B cell (primary cell): ENCODE measurements at regions of chr1 and their contacts with region 1.

Region 1: GRCh38 chr1:84944767-84945486 is 51.9 kb upstream of the LPAR3 start:
- DNase-seq: peak; percentile 95
- ATAC-seq: peak; percentile 93
- H3K4me3 ChIP-seq: peak overlapping the region; percentile 49 to 76 (median 60)
- H3K4me3 Mint-ChIP-seq: peak overlapping the region; percentile 80
- H3K27ac ChIP-seq: peak overlapping the region; percentile 78 to 83
- H3K27ac Mint-ChIP-seq: peak overlapping the region; percentile 87
- H3K4me1 ChIP-seq: peaks cover 0 to 13% of the 10 kb centered on the region in 2 donors
- H3K4me1 Mint-ChIP-seq: peaks cover 10% of the 10 kb centered on the region
- H3K27me3 ChIP-seq: no peaks in the 10 kb centered on the region
- H3K27me3 Mint-ChIP-seq: no peaks in the 10 kb centered on the region
- CTCF ChIP-seq: peak; percentile 99

Region 2: DNA sequence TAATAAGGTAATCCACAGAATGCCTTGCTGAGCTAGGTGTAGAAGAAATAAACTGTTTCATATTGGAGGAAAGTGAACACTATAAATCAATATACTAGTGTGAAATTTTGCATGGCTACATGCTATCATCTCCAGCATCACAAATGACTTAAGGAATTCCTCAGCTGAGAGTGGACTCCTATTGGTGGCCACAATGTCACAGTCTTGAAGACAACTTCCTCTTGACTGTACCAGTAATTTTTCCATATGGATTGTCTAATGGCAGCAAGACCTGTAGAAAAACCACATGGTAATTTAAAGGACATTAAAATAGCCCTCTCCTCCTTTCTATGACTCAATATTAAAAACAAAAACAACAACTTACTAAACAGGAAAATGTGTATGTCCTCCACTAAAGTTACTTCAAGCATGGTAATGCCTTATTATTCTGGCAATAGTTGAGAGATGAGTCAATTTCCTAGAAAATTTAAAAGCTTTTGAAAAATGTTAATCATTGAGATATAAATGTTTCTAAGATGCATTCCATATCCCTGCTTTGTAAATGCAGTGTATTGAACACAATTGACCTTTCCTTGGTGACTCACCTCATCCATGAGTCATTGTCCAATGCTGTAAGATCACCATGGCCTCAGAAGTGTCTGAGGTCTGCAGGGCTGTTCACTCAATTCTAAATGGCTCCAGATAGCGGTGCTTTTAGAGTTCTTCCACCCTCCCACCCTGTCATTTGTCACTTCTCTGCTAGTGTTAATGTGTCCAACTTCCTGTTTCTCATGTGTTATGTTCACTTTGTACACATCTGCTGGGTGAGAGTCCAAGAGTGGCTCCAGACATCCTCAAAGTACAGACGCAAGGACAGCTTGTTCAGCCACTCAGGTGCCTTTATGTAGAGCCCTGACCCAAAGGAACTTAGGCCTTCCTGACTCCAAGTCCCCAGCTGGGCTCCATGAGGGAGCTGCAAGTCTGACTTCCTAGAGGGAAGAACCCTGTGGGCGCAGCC is 579.4 kb before region 1 on chr1:
- CTCF ChIA-PET with region 1: no interaction called
- POLR2A ChIA-PET with region 1: no interaction called
- intact Hi-C with region 1: no loop called
- DNase-seq: no peak
- ATAC-seq: peak; percentile 14
- H3K4me3 ChIP-seq: no peak overlapping the region
- H3K4me3 Mint-ChIP-seq: no peak overlapping the region
- H3K27ac ChIP-seq: no peak overlapping the region
- H3K27ac Mint-ChIP-seq: no peak overlapping the region
- H3K4me1 ChIP-seq: no peaks in the 10 kb centered on the region
- H3K4me1 Mint-ChIP-seq: no peaks in the 10 kb centered on the region
- H3K27me3 ChIP-seq: no peaks in the 10 kb centered on the region
- H3K27me3 Mint-ChIP-seq: no peaks in the 10 kb centered on the region
- CTCF ChIP-seq: no peak

Region 3: GRCh38 chr1:84506002-84506728 is 438.8 kb before region 1 on chr1 and contains the starts of genes GNG5 and SPATA1:
- CTCF ChIA-PET with region 1: no interaction called
- POLR2A ChIA-PET with region 1: no interaction called
- intact Hi-C with region 1: loop called (anchors 2 kb)
- DNase-seq: peak; percentile 98
- ATAC-seq: peak; percentile 88
- H3K4me3 ChIP-seq: peak within 1 kb of the TSS; percentile 82 to 98 (median 90)
- H3K4me3 Mint-ChIP-seq: peak within 1 kb of the TSS; percentile 95
- H3K27ac ChIP-seq: peak within 1 kb of the TSS; percentile 82 to 89
- H3K27ac Mint-ChIP-seq: peak within 1 kb of the TSS; percentile 98
- H3K4me1 ChIP-seq: peaks cover 23 to 27% of the 10 kb centered on the region in 2 donors
- H3K4me1 Mint-ChIP-seq: peaks cover 35% of the 10 kb centered on the region
- H3K27me3 ChIP-seq: no peaks in the 10 kb centered on the region
- H3K27me3 Mint-ChIP-seq: no peaks in the 10 kb centered on the region
- CTCF ChIP-seq: no peak
- total RNA-seq, gene GNG5: 36.0 and 41.6 TPM in 2 replicates
- total RNA-seq, gene SPATA1: 6.4 and 8.6 TPM in 2 replicates

Region 4: GRCh38 chr1:84959294-84959693 is 14.4 kb after region 1 on chr1:
- CTCF ChIA-PET with region 1: interaction called, 17 read pairs
- POLR2A ChIA-PET with region 1: no interaction called
- intact Hi-C with region 1: no loop called
- DNase-seq: no peak
- ATAC-seq: no peak
- H3K4me3 ChIP-seq: no peak overlapping the region
- H3K4me3 Mint-ChIP-seq: no peak overlapping the region
- H3K27ac ChIP-seq: no peak overlapping the region
- H3K27ac Mint-ChIP-seq: no peak overlapping the region
- H3K4me1 ChIP-seq: no peaks in the 10 kb centered on the region
- H3K4me1 Mint-ChIP-seq: peaks cover 3% of the 10 kb centered on the region
- H3K27me3 ChIP-seq: no peaks in the 10 kb centered on the region
- H3K27me3 Mint-ChIP-seq: no peaks in the 10 kb centered on the region
- CTCF ChIP-seq: no peak

Region 5: GRCh38 chr1:84996846-84997666 is 52.1 kb after region 1 on chr1 and contains the start of gene MCOLN2:
- CTCF ChIA-PET with region 1: interaction called, 53 read pairs
- POLR2A ChIA-PET with region 1: interaction called, 4 read pairs
- intact Hi-C with region 1: loop called (anchors 1 kb)
- DNase-seq: peak; percentile 72
- ATAC-seq: peak; percentile 71
- H3K4me3 ChIP-seq: peak within 1 kb of the TSS; percentile 41 to 78 (median 63)
- H3K4me3 Mint-ChIP-seq: peak within 1 kb of the TSS; percentile 85
- H3K27ac ChIP-seq: peak within 1 kb of the TSS; percentile 50 to 59
- H3K27ac Mint-ChIP-seq: peak within 1 kb of the TSS; percentile 82
- H3K4me1 ChIP-seq: peaks cover 47 to 50% of the 10 kb centered on the region in 2 donors
- H3K4me1 Mint-ChIP-seq: peaks cover 61% of the 10 kb centered on the region
- H3K27me3 ChIP-seq: peaks cover 0 to 10% (median 2%) of the 10 kb centered on the region in 4 experiments
- H3K27me3 Mint-ChIP-seq: no peaks in the 10 kb centered on the region
- CTCF ChIP-seq: no peak
- total RNA-seq, gene MCOLN2: 25.8 and 35.3 TPM in 2 replicates

Region 6: GRCh38 chr1:85048296-85049064 is 103.6 kb after region 1 on chr1 and contains the start of gene MCOLN3:
- CTCF ChIA-PET with region 1: interaction called, 9 read pairs
- POLR2A ChIA-PET with region 1: no interaction called
- intact Hi-C with region 1: loop called (anchors 5 kb)
- DNase-seq: peak; percentile 64
- ATAC-seq: peak; percentile 70
- H3K4me3 ChIP-seq: peak within 1 kb of the TSS in 4 of 5 experiments; percentile 39 to 69 (median 53)
- H3K4me3 Mint-ChIP-seq: peak within 1 kb of the TSS; percentile 87
- H3K27ac ChIP-seq: no peak within 1 kb of the TSS
- H3K27ac Mint-ChIP-seq: no peak within 1 kb of the TSS
- H3K4me1 ChIP-seq: peaks cover 14 to 19% of the 10 kb centered on the region in 2 donors
- H3K4me1 Mint-ChIP-seq: peaks cover 14% of the 10 kb centered on the region
- H3K27me3 ChIP-seq: peaks cover 0 to 36% (median 35%) of the 10 kb centered on the region in 4 experiments
- H3K27me3 Mint-ChIP-seq: peaks cover 51% of the 10 kb centered on the region
- CTCF ChIP-seq: no peak
- total RNA-seq, gene MCOLN3: 0.10 TPM in 1 of 2 replicates, not detected in the other

Region 7: DNA sequence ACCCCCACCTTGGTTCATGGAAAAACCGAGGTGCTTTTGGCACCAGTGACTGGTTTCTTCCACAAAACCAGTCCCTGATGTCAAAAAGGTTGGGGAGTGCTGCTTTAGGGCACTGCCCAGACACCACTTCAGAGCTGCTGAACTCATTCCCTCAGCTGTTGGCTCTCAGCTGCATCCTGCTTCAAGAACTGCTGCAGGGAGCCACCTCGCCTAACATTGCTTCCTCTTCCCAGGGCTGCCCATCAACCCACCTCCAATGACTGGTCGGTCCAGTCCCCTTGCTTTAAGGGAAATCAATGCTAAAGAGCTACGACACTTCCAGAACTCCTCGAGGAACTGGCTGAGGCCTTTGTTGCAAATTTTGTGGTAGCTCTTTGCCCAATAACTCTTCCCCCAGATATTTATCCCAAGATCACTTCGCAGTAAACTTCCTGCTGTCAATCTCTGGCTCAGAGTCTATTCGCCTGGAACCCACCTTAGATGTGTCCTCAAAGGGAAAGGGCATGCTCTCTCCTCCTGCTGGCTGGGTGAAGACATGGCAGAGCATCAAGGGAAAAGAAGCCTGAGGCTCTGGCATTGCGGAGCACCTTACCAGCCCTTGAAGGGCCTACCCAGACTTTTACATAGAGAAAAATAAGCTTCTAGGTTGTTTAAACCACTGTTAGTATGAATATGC is 285.5 kb after region 1 on chr1:
- CTCF ChIA-PET with region 1: interaction called, 10 read pairs
- POLR2A ChIA-PET with region 1: no interaction called
- intact Hi-C with region 1: no loop called
- DNase-seq: no peak
- ATAC-seq: peak; percentile 41
- H3K4me3 ChIP-seq: no peak overlapping the region
- H3K4me3 Mint-ChIP-seq: no peak overlapping the region
- H3K27ac ChIP-seq: no peak overlapping the region
- H3K27ac Mint-ChIP-seq: no peak overlapping the region
- H3K4me1 ChIP-seq: no peaks in the 10 kb centered on the region
- H3K4me1 Mint-ChIP-seq: no peaks in the 10 kb centered on the region
- H3K27me3 ChIP-seq: peaks cover 0 to 2% (median 0%) of the 10 kb centered on the region in 4 experiments
- H3K27me3 Mint-ChIP-seq: peaks cover 20% of the 10 kb centered on the region
- CTCF ChIP-seq: peak; percentile 12

Region 8: GRCh38 chr1:85276215-85276977 is 331.5 kb after region 1 on chr1 and contains the start of gene BCL10:
- CTCF ChIA-PET with region 1: interaction called, 35 read pairs
- POLR2A ChIA-PET with region 1: interaction called, 3 read pairs
- intact Hi-C with region 1: loop called (anchors 1 kb)
- DNase-seq: peak; percentile 99
- ATAC-seq: peak; percentile 92
- H3K4me3 ChIP-seq: peak within 1 kb of the TSS; percentile 87 to 99 (median 98)
- H3K4me3 Mint-ChIP-seq: peak within 1 kb of the TSS; percentile 96
- H3K27ac ChIP-seq: peak within 1 kb of the TSS; percentile 99
- H3K27ac Mint-ChIP-seq: peak within 1 kb of the TSS; percentile 97
- H3K4me1 ChIP-seq: peaks cover 38 to 47% of the 10 kb centered on the region in 2 donors
- H3K4me1 Mint-ChIP-seq: peaks cover 55% of the 10 kb centered on the region
- H3K27me3 ChIP-seq: no peaks in the 10 kb centered on the region
- H3K27me3 Mint-ChIP-seq: no peaks in the 10 kb centered on the region
- CTCF ChIP-seq: no peak
- total RNA-seq, gene BCL10: 60.5 and 64.4 TPM in 2 replicates